Thyroid gland (tissue), 4 donors: ENCODE measurements at regions of chr2 and their contacts with region 1.

Region 1: DNA sequence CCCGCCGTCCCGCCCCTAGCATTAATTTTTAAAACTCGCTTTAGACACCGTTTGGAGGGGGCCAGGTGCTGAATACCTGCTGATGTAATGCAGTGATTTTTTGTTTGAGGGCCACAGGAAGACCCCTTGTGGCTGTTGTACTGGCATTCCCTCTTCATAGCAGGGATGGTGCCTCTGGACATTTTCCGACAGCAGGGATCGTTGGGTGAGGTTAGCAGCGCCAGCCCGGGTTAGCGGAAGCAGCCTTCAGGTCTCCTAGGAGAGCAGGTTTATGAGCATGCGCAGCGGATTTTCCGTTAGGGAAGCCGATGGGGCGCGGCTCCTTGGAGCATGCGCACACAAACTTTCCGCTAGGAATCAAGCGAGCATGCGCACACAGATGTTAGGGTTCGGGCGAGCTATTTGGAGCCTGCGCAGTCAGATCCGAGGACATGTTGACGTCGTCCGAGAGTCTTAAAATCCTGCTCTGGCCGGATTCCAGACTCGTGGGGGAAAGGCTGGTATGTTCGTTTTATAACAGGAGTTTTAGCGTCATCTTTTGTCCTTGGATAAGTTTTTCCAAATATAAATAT is 17.2 kb upstream of the C2orf74 start:
- DNase-seq: peak; percentile 96 to 98
- H3K4me3 ChIP-seq: peak overlapping the region in 2 of 3 donors; percentile 31 to 82
- H3K27ac ChIP-seq: peak overlapping the region; percentile 65 to 89 (median 79)
- H3K4me1 ChIP-seq: peaks cover 4 to 6% of the 10 kb centered on the region in 2 donors
- H3K27me3 ChIP-seq: no peaks in the 10 kb centered on the region
- CTCF ChIP-seq: peak in 1 of 6 experiments; percentile 10
- POLR2A ChIP-seq: peak in 1 of 2 donors; percentile 77

Region 2: GRCh38 chr2:61065715-61066709 is 78.8 kb before region 1 on chr2 and contains the start of gene SANBR:
- intact Hi-C with region 1: loop called (anchors 10 kb)
- DNase-seq: peak; percentile 86 to 88
- H3K4me3 ChIP-seq: peak within 1 kb of the TSS; percentile 76 to 91 (median 89)
- H3K27ac ChIP-seq: peak within 1 kb of the TSS in 2 of 3 donors; percentile 62 to 71
- H3K4me1 ChIP-seq: peaks cover 0 to 9% of the 10 kb centered on the region in 2 donors
- H3K27me3 ChIP-seq: no peaks in the 10 kb centered on the region
- CTCF ChIP-seq: peak in 1 of 6 experiments; percentile 6
- POLR2A ChIP-seq: peak in 1 of 2 donors; percentile 72
- total RNA-seq, gene SANBR: 5.3 to 16.3 (median 7.8) TPM

Region 3: DNA sequence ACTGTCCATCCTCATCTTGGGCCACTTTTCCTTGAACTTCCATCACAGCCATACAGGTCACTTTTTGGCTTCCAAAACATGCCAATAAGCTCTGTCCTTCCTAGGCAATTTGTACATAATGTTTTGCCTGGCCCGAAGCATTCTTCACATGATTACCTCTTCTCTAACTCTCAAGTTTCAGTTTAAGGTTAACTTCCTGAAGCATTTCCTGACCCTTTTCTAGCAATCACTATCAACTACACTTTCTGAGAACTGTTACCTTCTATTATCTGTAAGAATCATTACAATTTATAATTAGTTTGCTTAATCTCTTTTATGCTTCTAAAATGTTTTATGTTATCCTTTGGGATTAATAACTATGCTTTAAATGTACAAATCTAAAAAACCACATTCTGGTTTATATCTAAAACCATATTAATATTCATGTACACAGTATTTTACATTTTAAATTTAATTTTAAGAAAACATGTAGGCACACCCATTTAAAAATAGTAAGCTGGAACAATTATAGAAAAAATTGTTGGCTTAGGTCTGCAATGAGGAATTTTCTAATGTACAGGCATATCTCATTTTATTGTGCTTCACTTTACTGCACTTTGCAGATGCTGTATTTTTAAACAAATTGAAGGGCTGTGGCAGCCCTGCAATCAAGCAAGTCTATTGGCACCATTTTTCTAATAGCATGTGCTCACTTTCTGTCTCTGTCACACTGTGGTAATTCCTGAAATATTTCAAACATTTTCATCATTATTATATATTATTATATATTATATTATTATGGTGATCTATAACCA is 93.6 kb after region 1 on chr2:
- intact Hi-C with region 1: no loop called
- DNase-seq: no peak
- H3K4me3 ChIP-seq: no peak overlapping the region
- H3K27ac ChIP-seq: no peak overlapping the region
- H3K4me1 ChIP-seq: no peaks in the 10 kb centered on the region
- H3K27me3 ChIP-seq: no peaks in the 10 kb centered on the region
- CTCF ChIP-seq: no peak
- POLR2A ChIP-seq: no peak